ENCODE measurements at regions of chr5 and their contacts with region 1.

Region 1: GRCh38 chr5:58477760-58478376 is 13.4 kb upstream of the GAPT start:
- DNase-seq: no peak
- H3K4me3 Mint-ChIP-seq: no peak overlapping the region
- H3K27ac Mint-ChIP-seq: no peak overlapping the region
- H3K4me1 Mint-ChIP-seq: no peaks in the 10 kb centered on the region
- H3K27me3 Mint-ChIP-seq: no peaks in the 10 kb centered on the region

Region 2: DNA sequence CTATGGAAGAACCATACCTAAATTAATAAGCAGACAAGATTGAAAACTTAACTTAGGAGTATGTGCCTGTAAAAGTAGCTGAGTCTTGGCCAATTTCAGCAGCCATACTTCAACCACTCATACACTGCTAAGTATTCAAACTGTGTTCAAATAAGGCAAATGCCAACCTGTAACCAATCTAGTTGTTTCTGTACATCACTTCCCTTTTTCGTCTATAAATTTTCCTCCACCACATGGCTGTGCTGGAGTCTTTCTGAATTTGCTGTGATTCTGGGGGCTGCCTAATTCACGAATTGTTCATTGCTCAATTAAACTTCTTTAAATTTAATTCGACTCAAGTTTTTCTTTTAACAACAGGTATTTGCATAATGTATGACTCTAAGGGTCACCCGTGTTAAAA is 202.4 kb before region 1 on chr5:
- CTCF ChIA-PET with region 1: no interaction called
- DNase-seq: no peak
- H3K4me3 Mint-ChIP-seq: no peak overlapping the region
- H3K27ac Mint-ChIP-seq: no peak overlapping the region
- H3K4me1 Mint-ChIP-seq: no peaks in the 10 kb centered on the region
- H3K27me3 Mint-ChIP-seq: peaks cover 8% of the 10 kb centered on the region

Region 3: DNA sequence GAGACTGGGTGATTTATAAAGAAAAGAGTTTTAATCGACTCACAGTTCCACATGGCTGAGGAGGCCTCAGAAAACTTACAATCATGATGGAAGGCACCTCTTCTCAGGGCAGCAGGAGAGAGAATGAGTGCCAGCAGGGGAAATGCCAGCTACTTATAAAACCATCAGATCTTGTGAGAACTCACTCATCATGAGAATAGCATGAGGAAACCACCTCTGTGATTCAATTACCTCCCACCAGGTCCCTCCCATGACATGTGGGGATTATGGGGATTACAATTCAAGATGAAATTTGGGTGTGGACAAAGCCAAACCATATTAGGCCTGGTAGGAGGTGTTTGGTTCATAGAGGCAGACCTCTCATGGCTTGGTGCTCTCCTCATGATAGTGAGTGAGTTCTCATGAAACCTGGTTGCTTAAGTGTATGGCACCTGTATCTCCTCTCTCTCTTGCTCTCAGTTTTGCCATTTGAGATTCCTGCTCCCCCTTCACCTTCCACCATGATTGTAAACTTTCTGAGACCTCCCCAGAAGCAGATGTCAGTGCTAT is 53.1 kb after region 1 on chr5:
- CTCF ChIA-PET with region 1: no interaction called
- DNase-seq: no peak
- H3K4me3 Mint-ChIP-seq: no peak overlapping the region
- H3K27ac Mint-ChIP-seq: no peak overlapping the region
- H3K4me1 Mint-ChIP-seq: no peaks in the 10 kb centered on the region
- H3K27me3 Mint-ChIP-seq: no peaks in the 10 kb centered on the region

Region 4: GRCh38 chr5:58571501-58571900 is 93.6 kb after region 1 on chr5:
- CTCF ChIA-PET with region 1: no interaction called
- DNase-seq: no peak
- H3K4me3 Mint-ChIP-seq: no peak overlapping the region
- H3K27ac Mint-ChIP-seq: no peak overlapping the region
- H3K4me1 Mint-ChIP-seq: no peaks in the 10 kb centered on the region
- H3K27me3 Mint-ChIP-seq: no peaks in the 10 kb centered on the region

Region 5: DNA sequence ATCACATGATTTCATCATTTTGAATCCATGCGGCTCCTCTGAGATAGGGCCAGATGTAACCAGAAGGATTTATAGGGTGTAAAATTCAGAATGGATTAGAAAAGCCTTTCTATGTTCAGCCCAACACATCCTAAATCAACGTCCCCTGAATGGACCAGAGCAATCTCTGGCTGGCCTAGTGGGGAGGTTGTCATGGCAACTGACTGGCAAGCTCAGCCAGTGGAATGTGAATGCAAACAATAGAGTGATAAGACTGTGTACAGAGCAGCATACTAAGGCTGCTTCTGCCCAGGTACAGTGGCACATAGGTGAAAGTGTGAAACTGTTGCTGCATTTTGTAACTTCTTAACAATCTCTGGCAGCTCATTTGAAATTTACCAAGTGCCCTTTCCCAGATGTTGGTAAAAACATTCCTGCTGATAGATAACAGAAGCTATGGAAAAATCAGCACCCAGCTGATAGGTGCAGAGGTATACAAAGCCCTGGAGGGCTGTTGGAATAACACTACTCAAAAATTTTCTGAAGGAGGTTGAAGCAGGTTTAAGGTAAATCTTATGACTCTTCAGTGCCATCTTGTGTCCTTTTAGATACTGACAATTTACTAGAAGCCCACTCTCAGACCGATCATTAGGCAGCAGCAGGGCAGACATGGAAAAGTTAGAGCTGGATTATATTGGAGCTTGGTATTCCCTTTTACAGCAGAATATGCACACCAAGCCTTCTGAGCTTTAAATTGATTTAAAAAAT is 372.2 kb after region 1 on chr5:
- CTCF ChIA-PET with region 1: interaction called, 15 read pairs
- DNase-seq: no peak
- H3K4me3 Mint-ChIP-seq: no peak overlapping the region
- H3K27ac Mint-ChIP-seq: no peak overlapping the region
- H3K4me1 Mint-ChIP-seq: no peaks in the 10 kb centered on the region
- H3K27me3 Mint-ChIP-seq: peaks cover 5% of the 10 kb centered on the region

Measured in activated naive CD4-positive, alpha-beta T cell treated with anti-CD3 and anti-CD28 coated beads, Interleukin-2, amount 10 ng/mL, durations not matched to agents 7 days and 5 days (primary cell).